HepG2 (cell line): ENCODE measurements at regions of chrX and their contacts with region 1.

Region 1: GRCh38 chrX:31213941-31214340 is 142.1 kb upstream of the FTHL17 start:
- DNase-seq: no peak
- ATAC-seq: peak; percentile 55; the same call in 2 of the 3 replicates
- H3K4me3 ChIP-seq: no peak overlapping the region
- H3K27ac ChIP-seq: no peak overlapping the region
- H3K4me1 ChIP-seq: 0 out of 2 replicates have a peak, but pooled peaks cover 10% of the 10 kb centered on the region
- H3K27me3 ChIP-seq: no peaks in the 10 kb centered on the region
- CTCF ChIP-seq: peak; percentile 51
- EP300 ChIP-seq: no peak
- POLR2A ChIP-seq: no peak
- RAD21 ChIP-seq: peak; percentile 38; the same call in 1 of the 2 replicates

Region 2: DNA sequence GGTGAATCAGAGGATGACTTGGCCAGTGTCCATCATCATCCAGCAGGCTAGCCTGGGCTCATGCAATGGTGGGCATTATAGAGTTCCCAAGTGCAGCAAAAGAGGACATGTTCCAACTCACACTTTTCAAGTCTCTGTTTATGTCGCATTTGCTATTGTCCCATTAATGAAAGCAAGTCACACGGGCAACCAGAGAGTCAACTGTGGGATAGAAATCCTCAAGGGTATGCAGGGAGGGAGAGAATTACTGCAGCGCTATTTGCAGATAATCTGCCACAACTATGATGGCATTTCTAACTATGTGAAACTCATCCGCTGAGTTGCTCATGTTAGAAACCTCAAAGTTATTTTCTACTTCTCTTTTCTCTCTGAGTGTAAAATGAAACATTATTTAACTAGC is 246.4 kb before region 1 on chrX:
- CTCF ChIA-PET with region 1: no interaction called
- POLR2A ChIA-PET with region 1: no interaction called
- in situ Hi-C with region 1: no loop called
- intact Hi-C with region 1: no loop called
- DNase-seq: no peak
- ATAC-seq: no peak
- H3K4me3 ChIP-seq: no peak overlapping the region
- H3K27ac ChIP-seq: no peak overlapping the region
- H3K4me1 ChIP-seq: peaks cover 14% of the 10 kb centered on the region
- H3K27me3 ChIP-seq: no peaks in the 10 kb centered on the region
- CTCF ChIP-seq: no peak
- EP300 ChIP-seq: no peak
- POLR2A ChIP-seq: no peak
- RAD21 ChIP-seq: no peak

Region 3: DNA sequence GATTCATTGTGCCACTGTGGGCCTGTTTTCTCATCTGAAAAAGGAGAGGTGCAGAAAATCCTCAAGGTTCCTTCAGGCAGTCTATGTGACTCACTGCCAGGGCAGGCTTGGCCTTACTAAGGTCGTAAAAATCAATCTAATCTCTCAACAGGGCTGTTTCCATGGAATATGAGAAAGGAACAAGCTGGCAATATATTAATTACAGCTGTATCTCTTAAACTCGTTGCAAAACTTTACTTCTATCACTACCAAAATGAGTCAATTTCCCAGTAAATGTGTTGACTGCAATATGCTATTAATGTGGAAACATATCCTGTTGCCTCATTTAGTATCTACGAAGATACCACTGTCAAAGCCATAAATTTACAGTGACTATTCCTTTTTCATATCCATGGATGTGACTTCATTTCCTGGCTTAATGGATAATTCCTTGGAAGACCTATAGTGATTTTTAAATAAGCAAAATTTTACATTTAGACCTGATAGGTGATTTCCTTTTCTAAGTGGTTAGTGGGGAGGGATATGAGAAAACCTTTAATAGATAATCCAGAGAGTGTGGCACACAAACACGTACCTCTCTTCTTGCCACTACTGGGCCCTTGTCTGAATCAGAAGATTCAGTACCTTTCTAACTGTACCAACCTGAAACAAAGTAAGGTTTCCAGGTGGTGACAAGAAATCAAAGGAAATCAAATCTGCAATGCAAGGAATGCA is 14.7 kb before region 1 on chrX:
- CTCF ChIA-PET with region 1: no interaction called
- POLR2A ChIA-PET with region 1: no interaction called
- in situ Hi-C with region 1: no loop called
- intact Hi-C with region 1: no loop called
- DNase-seq: no peak
- ATAC-seq: no peak
- H3K4me3 ChIP-seq: no peak overlapping the region
- H3K27ac ChIP-seq: peak overlapping the region; percentile 57
- H3K4me1 ChIP-seq: peaks cover 17% of the 10 kb centered on the region
- H3K27me3 ChIP-seq: no peaks in the 10 kb centered on the region
- CTCF ChIP-seq: no peak
- EP300 ChIP-seq: no peak
- POLR2A ChIP-seq: no peak
- RAD21 ChIP-seq: no peak

Region 4: DNA sequence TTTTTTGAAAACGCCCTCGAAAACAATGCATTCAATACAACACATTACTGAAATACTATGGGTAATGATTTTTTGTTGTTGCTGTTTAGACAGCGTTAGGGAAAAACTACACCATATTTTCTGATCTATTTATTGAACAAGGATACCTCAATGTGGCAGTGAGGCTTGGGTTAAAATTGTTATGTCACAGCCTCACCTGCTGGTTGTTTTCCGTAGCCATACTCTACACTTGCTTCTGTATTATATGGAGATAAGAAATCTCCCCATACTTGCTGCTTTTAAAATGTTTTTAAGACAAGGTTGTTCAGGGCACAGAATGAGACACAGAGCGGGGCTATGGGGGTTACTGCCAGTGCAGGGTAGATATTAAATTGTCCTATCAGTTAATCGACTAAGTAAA is 79.5 kb after region 1 on chrX:
- CTCF ChIA-PET with region 1: interaction called, 7 read pairs
- POLR2A ChIA-PET with region 1: no interaction called
- in situ Hi-C with region 1: no loop called
- intact Hi-C with region 1: loop called (anchors 1 kb)
- DNase-seq: peak; percentile 2
- ATAC-seq: peak; percentile 67
- H3K4me3 ChIP-seq: no peak overlapping the region
- H3K27ac ChIP-seq: no peak overlapping the region
- H3K4me1 ChIP-seq: no peaks in the 10 kb centered on the region
- H3K27me3 ChIP-seq: no peaks in the 10 kb centered on the region
- CTCF ChIP-seq: peak; percentile 50
- EP300 ChIP-seq: no peak
- POLR2A ChIP-seq: no peak
- RAD21 ChIP-seq: no peak

Region 5: DNA sequence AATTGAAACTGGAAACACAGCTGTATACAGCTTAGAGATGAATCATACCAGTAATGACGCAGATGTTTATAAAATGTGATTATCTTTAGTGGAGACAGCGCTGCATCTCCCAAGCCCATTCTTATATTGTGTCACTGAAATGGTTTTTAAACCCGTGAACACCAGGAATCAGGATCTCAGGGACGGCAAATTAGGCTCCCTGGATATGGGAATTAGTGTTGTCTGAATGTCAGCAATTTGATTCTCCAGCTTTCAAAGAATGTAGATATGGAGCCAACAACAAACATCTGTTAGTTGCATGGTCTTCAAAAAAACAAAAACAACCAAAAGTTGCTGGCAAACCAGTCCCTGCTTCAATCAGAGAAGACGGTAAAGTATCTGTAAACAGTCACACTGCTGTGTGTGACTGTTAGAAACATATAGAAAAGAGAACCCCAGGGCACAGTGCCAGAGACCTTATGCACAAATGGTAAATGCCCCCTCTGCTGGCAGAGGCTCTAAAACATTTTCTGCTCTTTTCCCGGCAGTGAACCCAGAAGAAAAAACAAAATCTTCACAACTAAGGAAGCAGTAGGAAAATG is 209.8 kb after region 1 on chrX:
- CTCF ChIA-PET with region 1: interaction called, 3 read pairs
- POLR2A ChIA-PET with region 1: no interaction called
- in situ Hi-C with region 1: no loop called
- intact Hi-C with region 1: loop called (anchors 1 kb)
- DNase-seq: peak; percentile 15
- ATAC-seq: peak; percentile 65
- H3K4me3 ChIP-seq: no peak overlapping the region
- H3K27ac ChIP-seq: no peak overlapping the region
- H3K4me1 ChIP-seq: no peaks in the 10 kb centered on the region
- H3K27me3 ChIP-seq: no peaks in the 10 kb centered on the region
- CTCF ChIP-seq: peak; percentile 52
- EP300 ChIP-seq: no peak
- POLR2A ChIP-seq: no peak
- RAD21 ChIP-seq: no peak